IMR-90 (cell line): ENCODE measurements at regions of chr3 and their contacts with region 1.

Region 1: GRCh38 chr3:111071257-111072015 is at the start of gene NECTIN3:
- DNase-seq: peak; percentile 99
- ATAC-seq: peak; percentile 90
- H3K4me3 ChIP-seq: peak within 1 kb of the TSS; percentile 98
- H3K27ac ChIP-seq: peak within 1 kb of the TSS; percentile 99
- H3K4me1 ChIP-seq: no peaks in the 10 kb centered on the region; the same call in 1 of the 2 replicates
- H3K27me3 ChIP-seq: no peaks in the 10 kb centered on the region
- CTCF ChIP-seq: no peak
- POLR2A ChIP-seq: peak; percentile 72
- RAD21 ChIP-seq: 0 out of 2 replicates have a peak, but pooled peaks have one; percentile 6
- total RNA-seq, gene NECTIN3: 155 and 182 TPM in 2 replicates

Region 2: GRCh38 chr3:109275702-109276293 is 1795.6 kb before region 1 on chr3:
- CTCF ChIA-PET with region 1: no interaction called
- POLR2A ChIA-PET with region 1: no interaction called
- dilution Hi-C with region 1: no loop called
- in situ Hi-C with region 1: no loop called
- intact Hi-C with region 1: loop called (anchors 5 kb)
- DNase-seq: peak; percentile 37
- ATAC-seq: peak; percentile 70; the same call in 1 of the 2 replicates
- H3K4me3 ChIP-seq: no peak overlapping the region
- H3K27ac ChIP-seq: no peak overlapping the region
- H3K4me1 ChIP-seq: no peaks in the 10 kb centered on the region
- H3K27me3 ChIP-seq: no peaks in the 10 kb centered on the region
- CTCF ChIP-seq: peak; percentile 59
- POLR2A ChIP-seq: no peak
- RAD21 ChIP-seq: peak; percentile 75

Region 3: DNA sequence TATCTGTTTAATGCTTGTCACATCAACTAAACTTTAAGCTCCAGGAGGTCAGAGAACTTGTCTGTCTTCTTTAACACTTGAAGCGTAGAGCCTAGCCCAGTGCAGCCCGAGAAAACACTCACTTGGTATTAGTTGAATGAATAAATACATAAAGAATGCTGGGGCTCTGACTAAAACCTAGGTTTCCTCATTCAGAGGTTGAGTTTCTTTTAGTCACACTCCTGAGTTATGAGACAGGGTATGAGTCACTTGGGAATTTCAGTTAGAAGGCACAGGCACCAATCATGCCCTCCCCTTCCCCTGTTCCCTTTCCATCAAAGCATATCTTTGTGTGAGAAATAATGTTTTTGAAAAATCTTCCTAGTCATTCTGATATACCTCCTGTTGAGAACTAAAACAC is 1144.3 kb before region 1 on chr3:
- CTCF ChIA-PET with region 1: no interaction called
- POLR2A ChIA-PET with region 1: no interaction called
- dilution Hi-C with region 1: no loop called
- in situ Hi-C with region 1: no loop called
- intact Hi-C with region 1: loop called (anchors 5 kb)
- DNase-seq: peak; percentile 98
- ATAC-seq: peak; percentile 97
- H3K4me3 ChIP-seq: no peak overlapping the region
- H3K27ac ChIP-seq: 0 out of 2 replicates have a peak overlapping the region, but pooled peaks have one; percentile 13
- H3K4me1 ChIP-seq: peaks cover 7% of the 10 kb centered on the region
- H3K27me3 ChIP-seq: no peaks in the 10 kb centered on the region
- CTCF ChIP-seq: no peak
- POLR2A ChIP-seq: no peak
- RAD21 ChIP-seq: no peak

Region 4: GRCh38 chr3:110384601-110385000 is 686.8 kb before region 1 on chr3:
- CTCF ChIA-PET with region 1: interaction called, 3 read pairs
- POLR2A ChIA-PET with region 1: no interaction called
- dilution Hi-C with region 1: no loop called
- in situ Hi-C with region 1: no loop called
- intact Hi-C with region 1: loop called (anchors 10 kb)
- DNase-seq: peak; percentile 84
- ATAC-seq: peak; percentile 69
- H3K4me3 ChIP-seq: no peak overlapping the region
- H3K27ac ChIP-seq: peak overlapping the region; percentile 94
- H3K4me1 ChIP-seq: peaks cover 5% of the 10 kb centered on the region; the same call in 1 of the 2 replicates
- H3K27me3 ChIP-seq: no peaks in the 10 kb centered on the region
- CTCF ChIP-seq: no peak
- POLR2A ChIP-seq: no peak
- RAD21 ChIP-seq: no peak

Region 5: GRCh38 chr3:110576962-110577361 is 494.5 kb before region 1 on chr3:
- CTCF ChIA-PET with region 1: no interaction called
- POLR2A ChIA-PET with region 1: no interaction called
- dilution Hi-C with region 1: no loop called
- in situ Hi-C with region 1: no loop called
- intact Hi-C with region 1: loop called (anchors 5 kb)
- DNase-seq: peak; percentile 92
- ATAC-seq: peak; percentile 70
- H3K4me3 ChIP-seq: no peak overlapping the region
- H3K27ac ChIP-seq: peak overlapping the region; percentile 74
- H3K4me1 ChIP-seq: peaks cover 18% of the 10 kb centered on the region
- H3K27me3 ChIP-seq: no peaks in the 10 kb centered on the region
- CTCF ChIP-seq: no peak
- POLR2A ChIP-seq: no peak
- RAD21 ChIP-seq: peak; percentile 3; the same call in 1 of the 2 replicates

Region 6: GRCh38 chr3:111338059-111338698 is 266.7 kb after region 1 on chr3:
- CTCF ChIA-PET with region 1: no interaction called
- POLR2A ChIA-PET with region 1: no interaction called
- dilution Hi-C with region 1: no loop called
- in situ Hi-C with region 1: no loop called
- intact Hi-C with region 1: loop called (anchors 2 kb)
- DNase-seq: peak; percentile 86
- ATAC-seq: peak; percentile 95
- H3K4me3 ChIP-seq: no peak overlapping the region
- H3K27ac ChIP-seq: no peak overlapping the region
- H3K4me1 ChIP-seq: no peaks in the 10 kb centered on the region; the same call in 1 of the 2 replicates
- H3K27me3 ChIP-seq: no peaks in the 10 kb centered on the region
- CTCF ChIP-seq: peak; percentile 91
- POLR2A ChIP-seq: 0 out of 2 replicates have a peak, but pooled peaks have one; percentile 22
- RAD21 ChIP-seq: peak; percentile 95